HepG2 (cell line): ENCODE measurements at regions of chr22 and their contacts with region 1.

Region 1: DNA sequence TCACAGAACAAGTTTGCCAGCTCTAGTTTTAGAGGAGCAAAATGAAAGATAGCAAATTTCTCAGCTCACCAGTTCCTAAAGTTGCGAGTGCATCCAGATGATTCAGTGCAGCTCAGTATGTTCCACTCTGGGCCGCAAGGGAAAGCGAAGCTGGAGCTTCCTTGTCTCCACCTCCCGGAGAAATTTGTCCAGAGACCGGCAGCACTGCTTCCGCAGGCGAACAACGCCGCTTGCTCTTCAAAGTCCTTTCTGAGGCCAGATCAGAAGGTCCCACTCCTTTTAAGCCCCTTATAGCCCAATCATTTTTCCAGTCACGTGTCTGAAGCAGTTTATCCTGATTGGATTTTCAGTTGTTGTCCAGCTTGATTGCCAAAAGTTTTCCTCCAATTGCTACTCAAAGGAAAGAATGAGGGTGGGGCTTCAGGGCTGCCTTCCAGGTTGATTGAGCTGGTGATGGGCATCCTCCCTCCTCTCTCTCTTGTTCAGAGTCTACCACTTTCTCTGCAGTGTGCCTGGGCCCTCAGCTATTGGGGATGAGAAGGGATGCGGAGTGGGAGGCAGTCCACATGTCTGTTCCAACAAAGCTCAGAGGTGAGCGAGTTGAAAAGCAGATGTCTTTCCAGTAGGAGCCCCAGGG is at the start of gene ZNF280A:
- DNase-seq: peak; percentile 94
- ATAC-seq: peak; percentile 93
- H3K4me3 ChIP-seq: peak within 1 kb of the TSS; percentile 47 to 69 (median 68)
- H3K27ac ChIP-seq: peak within 1 kb of the TSS; percentile 32
- H3K4me1 ChIP-seq: peaks cover 16% of the 10 kb centered on the region
- H3K27me3 ChIP-seq: peaks cover 0 to 5% of the 10 kb centered on the region in 2 experiments; a peak in 2 of 5 replicates
- CTCF ChIP-seq: 0 out of 2 replicates have a peak, but pooled peaks have one; percentile 19
- EP300 ChIP-seq: no peak
- POLR2A ChIP-seq: peak; percentile 92 to 99
- RAD21 ChIP-seq: no peak
- total RNA-seq, gene ZNF280A: 2.9 and 4.4 TPM in 2 replicates

Region 2: GRCh38 chr22:22061085-22062077 is 458.8 kb before region 1 on chr22:
- CTCF ChIA-PET with region 1: no interaction called
- POLR2A ChIA-PET with region 1: no interaction called
- in situ Hi-C with region 1: no loop called
- intact Hi-C with region 1: no loop called
- DNase-seq: peak; percentile 83
- ATAC-seq: peak; percentile 93
- H3K4me3 ChIP-seq: peak overlapping the region in 2 of 3 experiments; percentile 0 to 65; a peak in 2 of 6 replicates
- H3K27ac ChIP-seq: peak overlapping the region; percentile 48
- H3K4me1 ChIP-seq: peaks cover 64% of the 10 kb centered on the region
- H3K27me3 ChIP-seq: peaks cover 0 to 9% of the 10 kb centered on the region in 2 experiments; a peak in 1 of 5 replicates
- CTCF ChIP-seq: peak; percentile 60
- EP300 ChIP-seq: peak; percentile 33 to 54; a peak in 2 of 4 replicates
- POLR2A ChIP-seq: no peak
- RAD21 ChIP-seq: no peak; the same call in 1 of the 2 replicates

Region 3: GRCh38 chr22:22144858-22145257 is 375.3 kb before region 1 on chr22:
- CTCF ChIA-PET with region 1: no interaction called
- POLR2A ChIA-PET with region 1: no interaction called
- in situ Hi-C with region 1: no loop called
- intact Hi-C with region 1: no loop called
- DNase-seq: no peak
- ATAC-seq: no peak
- H3K4me3 ChIP-seq: no peak overlapping the region
- H3K27ac ChIP-seq: no peak overlapping the region
- H3K4me1 ChIP-seq: no peaks in the 10 kb centered on the region
- H3K27me3 ChIP-seq: peaks cover 0 to 28% of the 10 kb centered on the region in 2 experiments; a peak in 2 of 5 replicates
- CTCF ChIP-seq: no peak
- EP300 ChIP-seq: no peak
- POLR2A ChIP-seq: no peak
- RAD21 ChIP-seq: no peak

Region 4: GRCh38 chr22:22508274-22509176 is 11.6 kb before region 1 on chr22 and contains the start of gene ZNF280B:
- CTCF ChIA-PET with region 1: no interaction called
- POLR2A ChIA-PET with region 1: interaction called, 32 read pairs
- in situ Hi-C with region 1: no loop called
- intact Hi-C with region 1: no loop called
- DNase-seq: peak; percentile 76
- ATAC-seq: peak; percentile 100
- H3K4me3 ChIP-seq: peak within 1 kb of the TSS; percentile 79 to 97 (median 87)
- H3K27ac ChIP-seq: peak within 1 kb of the TSS; percentile 44
- H3K4me1 ChIP-seq: peaks cover 16% of the 10 kb centered on the region
- H3K27me3 ChIP-seq: no peaks in the 10 kb centered on the region; a peak in 1 of 5 replicates
- CTCF ChIP-seq: peak; percentile 90
- EP300 ChIP-seq: no peak
- POLR2A ChIP-seq: peak; percentile 52 to 80; a peak in 3 of 4 replicates
- RAD21 ChIP-seq: 0 out of 2 replicates have a peak, but pooled peaks have one; percentile 26
- total RNA-seq, gene ZNF280B: 3.7 and 6.1 TPM in 2 replicates